A549 (cell line): ENCODE measurements at regions of chr1 and their contacts with region 1.

Region 1: DNA sequence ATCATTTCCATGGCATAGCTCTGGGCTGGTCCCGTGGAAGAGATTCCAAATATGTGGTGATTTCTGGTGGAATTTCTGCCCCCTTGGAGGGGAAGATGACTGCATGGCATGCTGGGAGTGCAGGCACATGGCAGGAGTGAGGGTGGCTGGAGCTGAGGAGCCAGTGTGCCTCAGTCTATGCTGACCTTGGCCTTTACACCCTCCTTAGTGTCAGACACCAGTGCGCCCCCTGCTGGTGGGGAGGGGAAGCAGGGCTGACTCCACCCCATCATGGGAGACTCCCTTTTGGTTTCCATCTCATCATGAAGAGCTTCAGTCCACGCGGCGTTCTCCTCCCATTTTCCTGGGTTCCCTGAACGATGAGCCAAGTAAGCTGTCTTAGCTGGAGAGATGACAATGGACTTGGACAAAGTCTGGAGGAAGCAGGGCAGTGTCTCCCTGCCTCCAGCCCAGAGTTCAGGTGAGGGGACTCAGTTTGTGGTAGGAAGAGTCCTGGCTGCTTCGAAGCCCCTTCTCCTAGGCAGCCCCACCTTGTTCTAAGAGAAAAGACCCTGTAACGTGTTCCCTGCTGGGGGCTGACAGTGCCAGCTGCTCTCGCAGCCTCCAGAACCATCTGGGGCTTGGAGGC is 10.3 kb downstream of the ALX3 start:
- DNase-seq: peak; percentile 29 to 52
- ATAC-seq: peak; percentile 55 to 86; a peak in 3 of 6 replicates
- H3K4me3 ChIP-seq: no peak overlapping the region
- H3K27ac ChIP-seq: no peak overlapping the region
- H3K4me1 ChIP-seq: no peaks in the 10 kb centered on the region
- CTCF ChIP-seq: peak; percentile 52
- EP300 ChIP-seq: no peak
- POLR2A ChIP-seq: no peak
- RAD21 ChIP-seq: 0 out of 5 replicates have a peak, but pooled peaks of 1 of the 2 experiments have one; percentile 11

Region 2: DNA sequence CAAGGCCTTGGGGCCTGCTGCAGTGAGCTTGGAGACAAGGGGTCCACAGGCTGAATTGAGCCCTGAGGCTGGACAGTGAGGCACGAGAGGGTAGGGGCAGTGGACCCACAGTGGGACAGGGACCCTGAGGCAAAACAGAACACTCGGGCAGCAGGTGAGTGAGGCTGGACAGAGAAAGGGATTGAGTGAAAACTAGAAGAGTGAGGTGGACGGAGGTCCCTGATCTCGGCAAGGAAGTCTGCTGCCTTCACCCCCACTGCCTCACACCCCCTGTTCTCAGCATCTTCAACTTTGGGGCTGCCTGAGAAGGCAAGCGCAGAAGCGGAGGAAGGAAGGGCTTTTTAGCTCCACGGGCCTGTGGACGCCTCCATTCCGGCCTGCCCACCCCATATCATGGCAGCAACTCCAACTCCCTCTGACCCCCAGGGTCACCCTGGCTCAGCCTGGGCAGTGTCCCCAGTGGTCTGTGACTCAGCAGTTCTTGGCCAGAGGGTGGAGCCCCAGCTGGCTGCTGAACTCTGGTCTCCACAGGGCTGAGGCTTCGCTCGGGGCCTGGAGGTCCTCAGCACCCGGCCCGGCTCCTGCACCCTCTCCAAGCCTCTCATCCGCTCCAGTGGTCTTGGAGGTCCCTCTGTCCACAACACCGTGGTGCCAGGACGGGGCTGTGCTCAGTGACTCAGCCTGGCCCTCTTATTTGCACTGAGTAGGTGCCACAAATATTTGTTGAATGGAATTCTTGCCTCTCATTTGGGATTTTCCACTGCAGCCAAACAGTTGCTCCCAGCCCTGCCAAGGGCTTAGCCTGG is 236.4 kb before region 1 on chr1:
- CTCF ChIA-PET with region 1: no interaction called
- POLR2A ChIA-PET with region 1: no interaction called
- DNase-seq: peak; percentile 38 to 83
- ATAC-seq: peak; percentile 73 to 82
- H3K4me3 ChIP-seq: no peak overlapping the region
- H3K27ac ChIP-seq: peak overlapping the region; percentile 94 to 98
- H3K4me1 ChIP-seq: peaks cover 74% of the 10 kb centered on the region
- CTCF ChIP-seq: no peak
- EP300 ChIP-seq: peak in 1 of 2 experiments; percentile 46; a peak in 1 of 5 replicates
- POLR2A ChIP-seq: peak; percentile 27; the same call in 1 of the 2 replicates
- RAD21 ChIP-seq: peak; percentile 18 to 20; a peak in 1 of 5 replicates

Region 3: DNA sequence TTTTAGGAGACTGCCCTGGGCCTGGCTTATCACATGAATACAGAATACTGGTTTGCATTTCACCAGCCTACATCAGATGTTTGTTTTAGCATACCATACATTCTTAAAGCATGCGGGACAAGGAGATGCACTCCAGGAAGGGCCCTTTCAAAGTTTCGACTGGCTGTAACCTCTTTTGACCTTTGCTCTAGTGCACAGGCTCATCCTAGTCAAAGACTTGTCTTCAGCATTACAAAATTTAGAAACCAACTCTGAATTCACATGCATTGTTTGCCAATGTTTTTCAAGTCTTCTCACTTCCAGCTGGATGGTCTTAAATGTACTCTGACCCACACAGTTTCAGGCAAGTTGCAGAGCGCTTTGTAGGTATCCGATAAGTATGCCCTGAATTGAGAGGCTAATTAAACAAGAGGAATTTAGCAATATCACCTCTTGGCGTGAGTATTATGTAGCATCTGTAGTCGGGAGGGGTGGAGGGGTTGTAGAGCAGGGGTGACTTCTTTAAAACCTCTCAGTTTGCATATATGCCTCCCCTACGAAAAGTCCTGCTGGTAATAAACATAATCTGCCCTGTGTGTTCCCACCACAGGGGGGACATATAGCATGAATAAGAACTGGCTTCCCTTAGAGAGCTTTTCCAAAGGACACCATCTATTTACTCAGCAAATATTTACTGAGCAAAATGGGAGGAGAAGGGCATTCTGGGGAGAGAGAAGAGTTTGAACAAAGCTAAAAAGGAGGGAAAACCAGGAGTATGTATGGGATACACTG is 100.0 kb before region 1 on chr1:
- CTCF ChIA-PET with region 1: no interaction called
- POLR2A ChIA-PET with region 1: no interaction called
- DNase-seq: peak; percentile 87 to 96
- ATAC-seq: peak; percentile 96 to 98
- H3K4me3 ChIP-seq: no peak overlapping the region
- H3K27ac ChIP-seq: peak overlapping the region; percentile 95 to 96
- H3K4me1 ChIP-seq: peaks cover 52% of the 10 kb centered on the region
- CTCF ChIP-seq: peak; percentile 27; the same call in 1 of the 3 replicates
- EP300 ChIP-seq: peak; percentile 15 to 84; a peak in 3 of 5 replicates
- POLR2A ChIP-seq: no peak
- RAD21 ChIP-seq: peak; percentile 46 to 47

Region 4: GRCh38 chr1:110076789-110077500 is 16.8 kb after region 1 on chr1:
- CTCF ChIA-PET with region 1: interaction called, 22 read pairs
- POLR2A ChIA-PET with region 1: no interaction called
- DNase-seq: no peak
- ATAC-seq: no peak
- H3K4me3 ChIP-seq: no peak overlapping the region
- H3K27ac ChIP-seq: no peak overlapping the region
- H3K4me1 ChIP-seq: no peaks in the 10 kb centered on the region
- CTCF ChIP-seq: no peak
- EP300 ChIP-seq: no peak
- POLR2A ChIP-seq: no peak
- RAD21 ChIP-seq: no peak